ENCODE measurements at regions of chr16 and their contacts with region 1.

Region 1: GRCh38 chr16:75110637-75111513 is 5.7 kb downstream of the LDHD start:
- DNase-seq: peak; percentile 93
- ATAC-seq: peak; percentile 67
- H3K4me3 Mint-ChIP-seq: peak overlapping the region; percentile 84
- H3K27ac Mint-ChIP-seq: peak overlapping the region; percentile 92
- H3K4me1 Mint-ChIP-seq: peaks cover 63% of the 10 kb centered on the region
- H3K27me3 Mint-ChIP-seq: peaks cover 6% of the 10 kb centered on the region

Region 2: GRCh38 chr16:74709441-74709877 is 401.4 kb before region 1 on chr16:
- CTCF ChIA-PET with region 1: no interaction called
- POLR2A ChIA-PET with region 1: no interaction called
- intact Hi-C with region 1: loop called in 1 of 2 experiments (anchors 10 kb)
- DNase-seq: peak; percentile 90
- ATAC-seq: peak; percentile 99
- H3K4me3 Mint-ChIP-seq: no peak overlapping the region
- H3K27ac Mint-ChIP-seq: no peak overlapping the region
- H3K4me1 Mint-ChIP-seq: peaks cover 6% of the 10 kb centered on the region
- H3K27me3 Mint-ChIP-seq: no peaks in the 10 kb centered on the region

Region 3: DNA sequence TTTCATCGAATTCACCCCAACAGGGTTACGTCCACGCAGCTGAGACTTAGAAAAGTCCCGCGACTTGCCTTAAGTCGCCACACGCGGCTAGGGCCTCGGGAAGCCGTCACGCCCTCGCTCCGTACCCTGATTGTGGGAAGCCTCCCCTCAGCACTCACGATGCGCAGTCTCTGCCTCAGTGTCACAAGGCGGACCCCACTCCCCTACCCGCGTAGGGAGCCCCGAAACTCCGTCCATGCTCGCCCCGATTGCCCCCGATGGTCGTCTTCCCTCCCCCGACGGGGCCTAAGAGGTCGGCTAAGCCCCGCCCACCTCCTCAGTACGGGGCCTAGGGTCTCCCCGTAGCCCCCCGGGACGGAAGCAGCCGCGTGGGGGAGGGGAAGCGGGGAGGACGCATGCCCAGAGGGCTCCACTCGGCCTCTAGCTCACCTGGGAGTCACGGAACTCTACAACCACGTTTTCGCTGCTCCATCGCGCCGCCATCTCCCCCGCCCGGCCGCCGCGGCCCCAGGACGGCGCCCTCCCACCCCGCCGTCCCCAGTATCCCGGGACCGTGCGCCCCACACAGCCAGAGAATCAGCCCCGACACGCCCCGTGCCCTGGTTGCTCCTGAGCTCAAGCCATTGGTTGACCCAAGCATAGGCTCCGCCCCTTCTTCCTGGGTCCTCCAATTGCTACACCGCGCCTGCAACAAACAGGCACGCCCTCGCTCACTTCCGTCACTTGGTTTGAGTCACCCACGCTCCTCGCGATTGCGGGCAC is 126.2 kb before region 1 on chr16 and contains the start of gene WDR59:
- CTCF ChIA-PET with region 1: interaction called, 25 read pairs
- POLR2A ChIA-PET with region 1: interaction called, 18 read pairs
- intact Hi-C with region 1: loop called (anchors 1 kb)
- DNase-seq: peak; percentile 100
- ATAC-seq: peak; percentile 100
- H3K4me3 Mint-ChIP-seq: peak within 1 kb of the TSS; percentile 85
- H3K27ac Mint-ChIP-seq: peak within 1 kb of the TSS; percentile 85
- H3K4me1 Mint-ChIP-seq: peaks cover 17% of the 10 kb centered on the region
- H3K27me3 Mint-ChIP-seq: no peaks in the 10 kb centered on the region
- total RNA-seq, gene WDR59: 69.2 to 91.4 TPM

Region 4: DNA sequence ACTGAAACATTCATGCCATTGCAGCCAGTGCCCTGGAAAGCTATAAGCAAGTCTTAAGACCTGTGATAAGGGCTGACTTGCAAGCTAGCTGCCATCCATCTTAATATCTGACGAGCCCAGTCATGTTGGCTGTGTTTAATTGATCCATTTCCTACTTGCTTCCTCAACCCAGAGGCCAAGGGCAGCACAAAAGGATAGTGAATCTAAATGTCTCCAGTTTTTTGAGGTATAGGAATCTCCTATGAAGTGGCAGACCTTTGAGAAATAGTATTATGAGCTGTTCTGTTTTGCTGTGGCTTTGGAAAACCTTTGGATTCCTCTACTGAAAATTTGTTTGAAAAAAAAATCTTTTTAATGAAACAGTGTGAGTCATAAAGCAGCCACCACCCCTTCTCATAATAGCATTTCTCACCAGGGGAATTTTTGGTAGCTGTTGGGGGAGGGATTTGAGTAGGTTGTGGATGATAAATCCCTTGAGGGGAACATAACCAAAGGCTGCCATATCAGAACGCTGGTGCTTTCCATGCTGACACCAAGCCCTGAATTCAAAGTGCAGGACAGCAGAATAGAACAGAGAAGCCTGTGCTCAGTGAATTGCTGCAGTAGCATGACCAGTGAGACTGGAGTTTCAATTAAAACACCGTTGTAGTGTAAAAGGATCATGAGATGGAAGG is 99.1 kb before region 1 on chr16:
- CTCF ChIA-PET with region 1: interaction called, 37 read pairs
- POLR2A ChIA-PET with region 1: interaction called, 6 read pairs
- intact Hi-C with region 1: no loop called
- DNase-seq: peak; percentile 77
- ATAC-seq: peak; percentile 92
- H3K4me3 Mint-ChIP-seq: peak overlapping the region; percentile 54
- H3K27ac Mint-ChIP-seq: peak overlapping the region; percentile 90
- H3K4me1 Mint-ChIP-seq: peaks cover 57% of the 10 kb centered on the region
- H3K27me3 Mint-ChIP-seq: no peaks in the 10 kb centered on the region

Region 5: GRCh38 chr16:75089486-75090202 is 21.2 kb before region 1 on chr16:
- CTCF ChIA-PET with region 1: interaction called, 16 read pairs
- POLR2A ChIA-PET with region 1: interaction called, 6 read pairs
- intact Hi-C with region 1: no loop called
- DNase-seq: no peak
- ATAC-seq: peak; percentile 48
- H3K4me3 Mint-ChIP-seq: no peak overlapping the region
- H3K27ac Mint-ChIP-seq: no peak overlapping the region
- H3K4me1 Mint-ChIP-seq: peaks cover 49% of the 10 kb centered on the region
- H3K27me3 Mint-ChIP-seq: no peaks in the 10 kb centered on the region